Panc1 (cell line): ENCODE measurements at regions of chr4 and their contacts with region 1.

Region 1: GRCh38 chr4:88616275-88617150 is 24.2 kb downstream of the HERC3 start:
- DNase-seq: peak; percentile 75
- ATAC-seq: no peak
- H3K4me3 ChIP-seq: no peak overlapping the region
- H3K27ac ChIP-seq: no peak overlapping the region
- H3K4me1 ChIP-seq: no peaks in the 10 kb centered on the region
- H3K27me3 ChIP-seq: no peaks in the 10 kb centered on the region
- CTCF ChIP-seq: no peak

Region 2: GRCh38 chr4:88743696-88744095 is 127.2 kb after region 1 on chr4:
- CTCF ChIA-PET with region 1: no interaction called
- POLR2A ChIA-PET with region 1: no interaction called
- in situ Hi-C with region 1: no loop called
- intact Hi-C with region 1: no loop called
- DNase-seq: no peak
- ATAC-seq: no peak
- H3K4me3 ChIP-seq: no peak overlapping the region
- H3K27ac ChIP-seq: no peak overlapping the region
- H3K4me1 ChIP-seq: no peaks in the 10 kb centered on the region
- H3K27me3 ChIP-seq: no peaks in the 10 kb centered on the region
- CTCF ChIP-seq: no peak

Region 3: GRCh38 chr4:89541998-89542397 is 925.5 kb after region 1 on chr4:
- CTCF ChIA-PET with region 1: no interaction called
- POLR2A ChIA-PET with region 1: interaction called, 14 read pairs
- in situ Hi-C with region 1: no loop called
- intact Hi-C with region 1: no loop called
- DNase-seq: no peak
- ATAC-seq: no peak
- H3K4me3 ChIP-seq: no peak overlapping the region
- H3K27ac ChIP-seq: no peak overlapping the region
- H3K4me1 ChIP-seq: no peaks in the 10 kb centered on the region
- H3K27me3 ChIP-seq: no peaks in the 10 kb centered on the region
- CTCF ChIP-seq: no peak